GM10248 (cell line): ENCODE measurements at regions of chr3 and their contacts with region 1.

Region 1: DNA sequence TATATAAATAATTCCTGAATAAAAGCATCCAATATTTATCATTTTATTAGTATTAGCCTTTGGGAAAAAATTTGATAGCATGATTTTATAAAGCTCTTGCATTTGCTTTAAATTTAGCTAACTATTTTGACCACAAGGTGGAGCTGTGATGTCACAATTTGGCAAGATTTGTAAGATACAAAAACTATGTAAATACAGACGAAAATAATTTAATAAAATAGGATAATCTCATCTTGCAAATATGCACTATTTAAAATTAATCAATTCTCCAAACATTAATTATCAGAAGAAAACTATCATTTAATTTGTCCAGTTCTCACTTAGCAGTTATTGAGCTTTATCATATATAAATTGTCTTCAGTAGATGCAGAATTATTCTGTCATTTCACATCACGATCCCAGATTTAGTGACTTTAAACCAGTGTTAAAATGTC is 95.4 kb downstream of the PLOD2 start:
- DNase-seq: no peak
- CTCF ChIP-seq: peak; percentile 70

Region 2: DNA sequence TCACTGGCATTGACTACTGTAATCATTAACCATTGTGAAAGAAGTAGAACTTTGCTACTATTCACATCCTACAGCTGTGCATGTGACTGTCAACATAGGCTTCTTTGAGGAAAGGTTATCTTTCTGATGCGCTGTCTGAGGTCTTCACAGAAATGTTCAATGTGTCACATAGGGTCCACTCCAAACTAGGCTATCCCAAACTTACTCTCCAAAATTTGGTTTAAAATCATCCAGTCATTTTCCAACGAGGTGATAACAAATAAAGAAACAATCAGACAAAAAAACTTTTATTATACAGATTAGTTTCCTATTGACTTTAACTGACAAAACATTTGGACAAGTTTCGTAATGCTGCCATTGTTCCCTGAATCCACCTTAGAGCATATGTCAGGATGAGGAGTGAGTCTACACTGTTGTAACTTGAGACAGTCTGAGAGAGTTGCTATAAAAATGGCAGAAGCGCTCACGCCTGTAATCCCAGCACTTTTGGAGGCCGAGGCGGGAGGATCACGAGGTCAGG is 416.2 kb before region 1 on chr3:
- CTCF ChIA-PET with region 1: no interaction called
- POLR2A ChIA-PET with region 1: no interaction called
- DNase-seq: no peak
- CTCF ChIP-seq: no peak

Region 3: DNA sequence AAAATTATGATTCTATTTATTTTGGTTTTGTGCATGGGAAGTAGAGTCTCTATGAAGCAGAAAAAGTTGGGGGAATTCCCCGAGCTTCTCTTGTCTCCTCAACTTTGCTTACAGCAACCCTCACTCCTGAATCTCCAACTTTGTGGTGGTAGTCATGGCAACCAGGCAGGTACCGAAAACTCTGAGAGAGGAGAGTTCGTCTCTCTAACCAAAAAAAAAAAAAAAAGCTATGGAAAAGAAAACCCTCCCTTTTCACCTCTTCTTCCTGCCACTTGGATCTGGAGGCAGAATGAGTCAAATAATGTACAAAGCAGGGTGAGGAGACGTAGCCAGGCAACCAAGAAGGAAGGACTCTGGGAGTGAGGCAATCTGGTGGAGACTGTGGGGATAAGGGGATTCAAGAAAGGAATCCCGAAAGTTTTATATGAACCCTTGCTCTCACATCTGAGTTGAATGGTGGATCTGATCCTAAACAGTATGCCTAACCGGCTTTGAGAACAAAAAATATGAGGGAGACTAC is 12.7 kb before region 1 on chr3:
- CTCF ChIA-PET with region 1: interaction called, 13 read pairs
- POLR2A ChIA-PET with region 1: no interaction called
- DNase-seq: no peak
- CTCF ChIP-seq: no peak

Region 4: GRCh38 chr3:146142757-146143156 is 77.2 kb after region 1 on chr3:
- CTCF ChIA-PET with region 1: no interaction called
- POLR2A ChIA-PET with region 1: no interaction called
- DNase-seq: no peak
- CTCF ChIP-seq: no peak

Region 5: DNA sequence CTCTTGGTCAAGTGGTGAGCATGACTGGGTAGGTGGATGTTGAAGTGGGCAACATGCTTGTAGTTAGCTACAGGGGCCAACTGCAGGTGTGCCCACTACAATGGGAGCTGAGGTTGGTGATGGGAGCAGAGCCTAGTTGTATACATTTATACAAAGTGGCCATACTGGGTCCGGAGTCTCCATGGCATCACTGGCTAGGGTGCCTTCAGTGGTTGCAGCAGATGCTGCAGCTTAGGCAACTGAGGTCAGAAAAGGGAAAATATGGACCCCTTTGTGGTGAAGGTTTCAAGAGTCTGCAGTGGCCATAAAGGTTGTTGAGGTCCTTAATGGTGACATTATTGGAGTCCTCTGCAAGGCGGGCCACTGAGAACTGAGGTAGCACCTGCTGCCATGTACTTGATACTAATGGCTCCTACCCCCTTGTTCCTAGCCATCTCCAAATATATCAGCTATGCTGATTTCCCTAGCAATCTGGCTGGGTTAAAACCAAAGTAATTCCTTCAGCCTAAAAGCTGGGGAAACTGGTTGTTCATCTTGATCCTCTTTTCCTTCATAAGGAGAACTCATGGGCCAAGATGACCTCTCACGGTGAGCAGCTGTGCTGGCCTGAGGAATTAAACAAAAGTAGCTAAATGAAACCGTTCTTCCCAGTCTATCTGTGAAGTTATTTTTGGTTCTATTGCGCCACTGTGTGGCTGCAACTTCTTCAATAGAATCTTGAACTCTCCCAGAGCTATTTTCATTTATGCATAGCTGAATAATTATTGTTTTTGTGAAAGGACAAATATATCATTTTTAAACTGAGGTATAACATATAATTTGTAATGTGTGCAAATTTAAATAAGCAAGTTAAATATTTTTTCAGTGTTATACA is 261.3 kb after region 1 on chr3:
- CTCF ChIA-PET with region 1: interaction called, 11 read pairs
- POLR2A ChIA-PET with region 1: no interaction called
- DNase-seq: no peak
- CTCF ChIP-seq: no peak